Activated T-helper 1 cell treated with anti-CD3 and anti-CD28 coated beads, Interleukin-12 subunit alpha, Interleukin-12 subunit beta, Interleukin-2, Interleukin-4 antibody, amounts not matched to agents 30 ng/mL and 10 ng/mL and 1 ng/mL, durations not matched to agents 14 hours and 24 hours and 36 hours (primary cell): ENCODE measurements at regions of chr1 and their contacts with region 1.

Region 1: GRCh38 chr1:29912425-29912824 is 676.1 kb downstream of the PTPRU start:
- DNase-seq: no peak
- H3K4me3 Mint-ChIP-seq: no peak overlapping the region
- H3K27ac Mint-ChIP-seq: no peak overlapping the region
- H3K4me1 Mint-ChIP-seq: no peaks in the 10 kb centered on the region
- H3K27me3 Mint-ChIP-seq: peaks cover 8% of the 10 kb centered on the region

Region 2: DNA sequence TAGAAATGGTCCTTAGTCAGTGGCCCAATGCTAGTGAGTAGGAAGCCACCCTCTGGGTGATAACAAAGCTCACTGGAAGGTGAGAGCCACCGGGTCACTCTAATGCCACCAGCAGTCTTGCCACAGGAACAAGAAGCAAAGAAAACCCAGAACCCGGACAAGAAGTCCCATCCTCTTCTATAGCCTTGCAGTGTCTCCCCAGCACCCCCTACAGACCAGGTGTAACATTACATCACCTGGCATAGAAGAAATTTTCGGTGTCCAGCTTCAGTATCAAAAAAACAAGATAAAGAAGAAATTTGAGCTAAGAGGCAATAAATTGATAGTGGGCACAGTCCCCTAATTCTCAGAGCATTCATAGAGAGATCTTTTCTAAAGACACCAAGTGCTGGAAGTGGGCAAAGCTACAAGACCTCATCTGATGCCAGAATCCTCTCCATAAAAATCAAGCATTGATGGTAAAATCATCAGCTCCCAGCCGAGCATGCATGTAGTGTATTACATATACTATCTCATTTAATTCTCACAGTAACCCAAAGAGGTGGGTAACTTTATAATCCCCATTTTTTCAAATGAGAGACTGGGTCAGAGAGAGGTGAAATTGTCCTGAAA is 320.0 kb after region 1 on chr1:
- intact Hi-C with region 1: loop called (anchors 5 kb)
- DNase-seq: peak; percentile 6
- H3K4me3 Mint-ChIP-seq: no peak overlapping the region
- H3K27ac Mint-ChIP-seq: no peak overlapping the region
- H3K4me1 Mint-ChIP-seq: no peaks in the 10 kb centered on the region
- H3K27me3 Mint-ChIP-seq: peaks cover 5% of the 10 kb centered on the region